Activated CD4-positive, alpha-beta T cell treated with anti-CD3 and anti-CD28 coated beads, Interleukin-2, amount 10 ng/mL, durations not matched to agents 7 days and 5 days (primary cell): ENCODE measurements at regions of chr11 and their contacts with region 1.

Region 1: GRCh38 chr11:117387992-117388755 is 60.5 kb downstream of the CEP164 start:
- DNase-seq: no peak
- H3K4me3 Mint-ChIP-seq: no peak overlapping the region
- H3K27ac Mint-ChIP-seq: no peak overlapping the region
- H3K4me1 Mint-ChIP-seq: peaks cover 4% of the 10 kb centered on the region
- H3K27me3 Mint-ChIP-seq: no peaks in the 10 kb centered on the region

Region 2: DNA sequence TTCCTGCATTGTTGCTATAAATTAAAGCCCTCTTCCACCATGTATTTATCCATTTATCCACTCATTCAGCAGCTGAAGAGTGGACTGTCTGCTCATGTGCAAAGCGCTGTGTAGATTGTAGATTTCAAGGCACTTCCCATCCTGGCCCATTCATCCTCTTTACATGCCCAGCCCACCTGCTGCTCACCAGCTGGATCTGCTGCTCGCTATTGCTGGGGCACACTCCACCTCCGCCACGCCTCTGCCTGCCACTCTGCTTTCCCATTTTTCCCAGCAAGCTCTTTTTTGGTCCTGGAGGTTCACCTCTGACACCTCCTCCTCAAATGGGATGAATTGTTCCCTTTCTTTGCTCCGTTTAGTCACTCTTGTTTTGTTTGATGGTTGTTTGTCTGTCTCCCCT is 12.2 kb before region 1 on chr11:
- CTCF ChIA-PET with region 1: interaction called, 10 read pairs
- POLR2A ChIA-PET with region 1: no interaction called
- DNase-seq: no peak
- H3K4me3 Mint-ChIP-seq: no peak overlapping the region
- H3K27ac Mint-ChIP-seq: no peak overlapping the region
- H3K4me1 Mint-ChIP-seq: no peaks in the 10 kb centered on the region
- H3K27me3 Mint-ChIP-seq: no peaks in the 10 kb centered on the region